Naive thymus-derived CD4-positive, alpha-beta T cell (primary cell): ENCODE measurements at regions of chr19 and their contacts with region 1.

Region 1: DNA sequence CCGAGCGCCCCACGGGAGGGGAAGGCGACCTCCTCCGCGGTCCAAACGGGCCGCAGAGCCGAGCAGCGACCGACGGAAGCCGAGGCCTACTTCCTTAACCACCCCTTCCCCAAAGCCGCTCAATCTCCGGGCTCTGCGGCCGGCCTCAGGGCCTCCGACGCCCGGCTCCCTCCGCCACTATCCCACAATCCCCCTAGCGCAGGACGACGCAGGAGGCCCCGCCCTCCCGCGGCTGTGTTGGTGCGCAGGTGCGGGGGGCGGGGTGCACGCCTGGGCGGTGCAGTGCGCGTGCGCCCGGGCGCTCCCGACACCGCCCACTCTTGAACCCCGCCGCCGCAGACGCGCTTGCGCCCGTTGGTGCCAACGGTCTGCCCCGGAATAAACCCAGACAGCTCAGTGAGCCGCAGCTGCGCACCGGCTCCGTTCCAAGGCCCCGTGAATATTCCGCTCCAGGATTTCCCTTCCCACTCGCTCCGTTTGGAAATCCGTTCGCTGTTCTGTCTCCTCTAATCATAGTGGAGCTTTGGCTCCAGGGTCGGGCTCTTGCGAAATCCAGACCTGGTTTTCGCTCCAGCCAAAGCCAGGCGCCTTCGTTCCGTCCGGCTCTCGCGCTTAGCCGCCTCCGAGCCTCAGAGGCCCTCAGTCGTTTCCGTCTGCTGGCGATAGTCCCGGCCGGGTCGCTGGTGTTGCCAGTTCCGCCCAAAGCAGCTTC is at the start of gene PPP6R1:
- DNase-seq: peak; percentile 92 to 97 (median 96)
- ATAC-seq: peak; percentile 91
- H3K4me3 ChIP-seq: peak within 1 kb of the TSS; percentile 87
- H3K4me3 Mint-ChIP-seq: peak within 1 kb of the TSS; percentile 89 to 99 (median 98)
- H3K27ac ChIP-seq: peak within 1 kb of the TSS; percentile 94
- H3K27ac Mint-ChIP-seq: peak within 1 kb of the TSS; percentile 97 to 99 (median 98)
- H3K4me1 ChIP-seq: peaks cover 31 to 43% of the 10 kb centered on the region in 2 donors
- H3K4me1 Mint-ChIP-seq: peaks cover 36 to 45% (median 41%) of the 10 kb centered on the region in 7 donors
- H3K27me3 ChIP-seq: no peaks in the 10 kb centered on the region
- H3K27me3 Mint-ChIP-seq: no peaks in the 10 kb centered on the region
- total RNA-seq, gene PPP6R1: 151 to 223 (median 168) TPM

Region 2: GRCh38 chr19:54952591-54953344 is 306.2 kb before region 1 on chr19:
- CTCF ChIA-PET with region 1: no interaction called
- POLR2A ChIA-PET with region 1: no interaction called
- intact Hi-C with region 1: no loop called
- DNase-seq: no peak
- ATAC-seq: peak; percentile 85
- H3K4me3 ChIP-seq: no peak overlapping the region
- H3K4me3 Mint-ChIP-seq: no peak overlapping the region
- H3K27ac ChIP-seq: no peak overlapping the region
- H3K27ac Mint-ChIP-seq: no peak overlapping the region
- H3K4me1 ChIP-seq: no peaks in the 10 kb centered on the region
- H3K4me1 Mint-ChIP-seq: no peaks in the 10 kb centered on the region
- H3K27me3 ChIP-seq: no peaks in the 10 kb centered on the region
- H3K27me3 Mint-ChIP-seq: peaks cover under 1 to 7% (median 4%) of the 10 kb centered on the region in 5 donors

Region 3: GRCh38 chr19:55178781-55179599 is 80.0 kb before region 1 on chr19:
- CTCF ChIA-PET with region 1: no interaction called
- POLR2A ChIA-PET with region 1: interaction called, 5 read pairs
- intact Hi-C with region 1: loop called (anchors 1 to 2 kb)
- DNase-seq: peak; percentile 87 to 98 (median 92)
- ATAC-seq: peak; percentile 93
- H3K4me3 ChIP-seq: peak overlapping the region; percentile 64
- H3K4me3 Mint-ChIP-seq: peak overlapping the region; percentile 49 to 85 (median 82)
- H3K27ac ChIP-seq: peak overlapping the region; percentile 41
- H3K27ac Mint-ChIP-seq: peak overlapping the region; percentile 38 to 94 (median 86)
- H3K4me1 ChIP-seq: peaks cover 15 to 32% of the 10 kb centered on the region in 2 donors
- H3K4me1 Mint-ChIP-seq: peaks cover 9 to 36% (median 26%) of the 10 kb centered on the region in 7 donors
- H3K27me3 ChIP-seq: peaks cover 13 to 50% of the 10 kb centered on the region in 2 donors
- H3K27me3 Mint-ChIP-seq: peaks cover 63 to 79% (median 67%) of the 10 kb centered on the region in 5 donors

Region 4: GRCh38 chr19:55289117-55289796 is 30.3 kb after region 1 on chr19:
- CTCF ChIA-PET with region 1: interaction called, 9 read pairs
- POLR2A ChIA-PET with region 1: interaction called, 156 read pairs
- intact Hi-C with region 1: loop called (anchors 5 kb)
- DNase-seq: no peak
- ATAC-seq: no peak
- H3K4me3 ChIP-seq: no peak overlapping the region
- H3K4me3 Mint-ChIP-seq: no peak overlapping the region
- H3K27ac ChIP-seq: no peak overlapping the region
- H3K27ac Mint-ChIP-seq: no peak overlapping the region
- H3K4me1 ChIP-seq: no peaks in the 10 kb centered on the region
- H3K4me1 Mint-ChIP-seq: peaks cover 0 to 9% (median 5%) of the 10 kb centered on the region in 7 donors
- H3K27me3 ChIP-seq: no peaks in the 10 kb centered on the region
- H3K27me3 Mint-ChIP-seq: no peaks in the 10 kb centered on the region

Region 5: GRCh38 chr19:55353803-55354697 is 95.1 kb after region 1 on chr19:
- CTCF ChIA-PET with region 1: no interaction called
- POLR2A ChIA-PET with region 1: interaction called, 3 read pairs
- intact Hi-C with region 1: loop called in 1 of 2 experiments (anchors 5 kb)
- DNase-seq: peak in 8 of 9 donors; percentile 44 to 70 (median 58)
- ATAC-seq: peak; percentile 90
- H3K4me3 ChIP-seq: peak overlapping the region; percentile 48
- H3K4me3 Mint-ChIP-seq: peak overlapping the region; percentile 66 to 86 (median 80)
- H3K27ac ChIP-seq: no peak overlapping the region
- H3K27ac Mint-ChIP-seq: peak overlapping the region in 2 of 9 donors; percentile 18 to 56
- H3K4me1 ChIP-seq: peaks cover 7 to 10% of the 10 kb centered on the region in 2 donors
- H3K4me1 Mint-ChIP-seq: peaks cover 14 to 25% (median 17%) of the 10 kb centered on the region in 7 donors
- H3K27me3 ChIP-seq: peaks cover 0 to 10% of the 10 kb centered on the region in 2 donors
- H3K27me3 Mint-ChIP-seq: peaks cover 25 to 55% (median 30%) of the 10 kb centered on the region in 5 donors

Region 6: DNA sequence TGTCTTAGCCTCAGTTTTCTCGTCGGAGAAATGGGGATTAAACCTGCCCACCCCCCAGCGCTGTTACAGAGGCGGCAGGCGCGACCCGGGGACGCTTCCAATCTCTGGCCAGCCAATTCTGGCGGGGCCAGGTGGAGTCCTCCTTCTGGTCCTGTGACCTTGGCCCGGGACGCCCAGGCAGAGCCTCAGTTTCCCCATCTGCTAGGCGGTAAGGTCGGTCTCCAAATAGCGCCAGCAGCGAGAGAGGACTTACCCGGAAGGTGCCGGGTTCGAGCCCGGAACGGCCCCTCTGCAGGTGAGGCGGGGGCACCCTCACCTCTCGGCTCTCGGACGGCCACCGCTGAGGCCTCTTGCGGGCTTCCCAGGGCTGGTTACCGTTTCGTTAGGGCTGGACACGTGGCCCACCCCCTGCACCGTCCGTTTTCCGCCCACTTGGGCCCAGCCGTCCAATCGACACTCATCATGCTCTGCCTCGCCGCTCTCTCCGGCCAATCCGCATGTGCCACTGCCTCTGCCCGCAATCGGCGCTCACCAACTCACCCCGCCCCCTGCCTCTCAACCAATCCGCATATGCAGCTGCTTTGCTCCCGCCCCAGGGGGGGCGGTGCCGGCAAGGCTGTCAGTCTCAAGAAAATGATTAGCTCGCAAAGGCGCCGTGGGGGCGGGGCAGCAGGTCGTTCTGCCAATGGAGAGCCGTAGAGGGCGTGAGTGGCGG is 202.4 kb after region 1 on chr19 and contains the start of gene ISOC2:
- CTCF ChIA-PET with region 1: no interaction called
- POLR2A ChIA-PET with region 1: interaction called, 5 read pairs
- intact Hi-C with region 1: loop called in 1 of 2 experiments (anchors 1 kb)
- DNase-seq: peak; percentile 99 to 100 (median 100)
- ATAC-seq: peak; percentile 98
- H3K4me3 ChIP-seq: peak within 1 kb of the TSS; percentile 91
- H3K4me3 Mint-ChIP-seq: peak within 1 kb of the TSS; percentile 86 to 99 (median 92)
- H3K27ac ChIP-seq: peak within 1 kb of the TSS; percentile 79
- H3K27ac Mint-ChIP-seq: peak within 1 kb of the TSS; percentile 68 to 94 (median 90)
- H3K4me1 ChIP-seq: peaks cover 4 to 12% of the 10 kb centered on the region in 2 donors
- H3K4me1 Mint-ChIP-seq: peaks cover 14 to 33% (median 20%) of the 10 kb centered on the region in 7 donors
- H3K27me3 ChIP-seq: no peaks in the 10 kb centered on the region
- H3K27me3 Mint-ChIP-seq: peaks cover 0 to 2% (median 0%) of the 10 kb centered on the region in 5 donors
- total RNA-seq, gene ISOC2: 5.1 to 20.1 (median 11.3) TPM

Region 7: DNA sequence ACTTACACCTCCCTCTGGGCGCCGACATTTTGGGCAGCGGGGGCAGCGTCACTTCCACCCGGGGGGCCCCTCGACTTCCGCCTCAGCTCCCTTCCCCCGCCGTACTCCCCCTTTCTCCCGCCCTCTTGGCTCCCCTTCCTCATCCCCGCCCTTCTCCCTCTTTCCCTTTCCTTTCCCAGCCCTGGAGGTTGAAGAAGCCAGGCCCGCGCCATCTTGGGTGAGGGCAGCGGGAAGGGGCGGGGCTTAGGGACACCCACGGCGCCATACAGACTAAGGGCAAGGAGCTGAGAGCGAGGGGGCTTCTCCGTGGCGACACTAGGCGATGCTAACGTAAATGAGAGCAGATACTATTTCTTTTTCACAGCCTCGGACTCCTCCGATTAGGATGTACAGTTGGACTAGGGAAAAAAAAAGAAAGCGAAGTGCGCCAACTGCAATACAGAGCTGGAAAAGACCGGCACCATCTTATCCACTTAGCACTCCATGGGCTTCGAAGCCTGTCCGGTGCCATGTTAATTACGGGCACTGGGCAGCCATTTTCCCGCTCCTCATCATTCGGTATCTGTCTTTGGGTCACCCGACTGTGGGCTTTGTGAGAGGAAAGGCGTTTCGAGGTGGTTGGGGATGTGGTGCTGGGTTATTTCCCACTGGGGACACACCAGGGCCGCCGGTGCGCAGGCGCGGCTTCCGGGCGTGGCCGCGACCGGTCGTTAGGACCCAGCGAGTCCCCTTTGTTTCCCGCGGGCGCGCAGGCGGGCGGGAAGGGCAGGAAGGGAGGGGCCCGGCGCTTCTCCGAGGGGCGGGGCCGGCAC is 340.7 kb after region 1 on chr19 and contains the start of gene FIZ1:
- CTCF ChIA-PET with region 1: no interaction called
- POLR2A ChIA-PET with region 1: interaction called, 6 read pairs
- intact Hi-C with region 1: loop called (anchors 1 kb)
- DNase-seq: peak; percentile 88 to 97 (median 95)
- ATAC-seq: peak; percentile 84
- H3K4me3 ChIP-seq: peak within 1 kb of the TSS; percentile 93
- H3K4me3 Mint-ChIP-seq: peak within 1 kb of the TSS; percentile 90 to 100 (median 99)
- H3K27ac ChIP-seq: peak within 1 kb of the TSS; percentile 93
- H3K27ac Mint-ChIP-seq: peak within 1 kb of the TSS; percentile 97 to 100 (median 99)
- H3K4me1 ChIP-seq: peaks cover 0 to 15% of the 10 kb centered on the region in 2 donors
- H3K4me1 Mint-ChIP-seq: peaks cover 20 to 36% (median 30%) of the 10 kb centered on the region in 7 donors
- H3K27me3 ChIP-seq: no peaks in the 10 kb centered on the region
- H3K27me3 Mint-ChIP-seq: no peaks in the 10 kb centered on the region
- total RNA-seq, gene FIZ1: 9.4 to 32.0 (median 16.1) TPM

Region 8: GRCh38 chr19:55653758-55654539 is 395.0 kb after region 1 on chr19:
- CTCF ChIA-PET with region 1: no interaction called
- POLR2A ChIA-PET with region 1: interaction called, 4 read pairs
- intact Hi-C with region 1: loop called (anchors 1 kb)
- DNase-seq: peak; percentile 95 to 100 (median 100)
- ATAC-seq: peak; percentile 83
- H3K4me3 ChIP-seq: peak overlapping the region; percentile 98
- H3K4me3 Mint-ChIP-seq: peak overlapping the region; percentile 83 to 99 (median 96)
- H3K27ac ChIP-seq: peak overlapping the region; percentile 99
- H3K27ac Mint-ChIP-seq: peak overlapping the region; percentile 95 to 100 (median 99)
- H3K4me1 ChIP-seq: peaks cover 30 to 36% of the 10 kb centered on the region in 2 donors
- H3K4me1 Mint-ChIP-seq: peaks cover 29 to 55% (median 39%) of the 10 kb centered on the region in 7 donors
- H3K27me3 ChIP-seq: no peaks in the 10 kb centered on the region
- H3K27me3 Mint-ChIP-seq: peaks cover 0 to 2% (median 0%) of the 10 kb centered on the region in 5 donors

Region 9: GRCh38 chr19:55857149-55857548 is 598.2 kb after region 1 on chr19:
- CTCF ChIA-PET with region 1: no interaction called
- POLR2A ChIA-PET with region 1: no interaction called
- intact Hi-C with region 1: no loop called
- DNase-seq: no peak
- ATAC-seq: no peak
- H3K4me3 ChIP-seq: no peak overlapping the region
- H3K4me3 Mint-ChIP-seq: no peak overlapping the region
- H3K27ac ChIP-seq: no peak overlapping the region
- H3K27ac Mint-ChIP-seq: no peak overlapping the region
- H3K4me1 ChIP-seq: no peaks in the 10 kb centered on the region
- H3K4me1 Mint-ChIP-seq: no peaks in the 10 kb centered on the region
- H3K27me3 ChIP-seq: no peaks in the 10 kb centered on the region
- H3K27me3 Mint-ChIP-seq: peaks cover 0 to 9% (median 0%) of the 10 kb centered on the region in 5 donors